PC-3 (cell line): ENCODE measurements at regions of chr13 and their contacts with region 1.

Region 1: DNA sequence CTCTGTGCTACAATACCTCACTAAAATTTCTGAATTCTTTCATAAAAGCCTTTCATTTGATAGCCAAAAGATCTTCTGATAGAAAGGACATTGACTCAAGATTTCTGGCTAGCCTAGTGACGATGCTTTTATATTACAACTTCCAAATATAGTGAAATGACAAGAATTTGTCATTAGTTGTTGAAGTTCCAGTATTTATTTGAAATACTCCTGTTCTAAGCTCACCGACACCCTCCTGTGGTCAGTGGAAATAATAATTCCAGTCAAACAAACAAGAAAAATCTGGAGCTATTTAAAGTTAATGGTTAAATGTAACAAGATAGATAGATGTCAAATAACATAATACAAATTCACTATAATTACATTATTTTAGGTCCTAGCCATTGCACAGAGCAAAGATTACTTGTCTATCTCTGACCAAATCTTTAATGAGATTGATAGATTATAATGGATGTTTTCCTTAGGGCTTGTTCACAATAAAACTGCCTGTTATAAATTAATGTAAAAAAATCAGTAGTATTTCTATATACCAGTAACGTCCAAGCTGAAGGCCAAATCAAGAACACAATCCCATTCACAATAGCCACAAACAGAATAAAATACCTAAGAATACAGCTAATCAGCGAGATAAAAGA is 195.5 kb downstream of the RGCC start:
- DNase-seq: peak; percentile 60
- ATAC-seq: no peak
- H3K4me3 ChIP-seq: no peak overlapping the region
- H3K27ac ChIP-seq: no peak overlapping the region
- H3K4me1 ChIP-seq: peaks cover 17% of the 10 kb centered on the region
- H3K27me3 ChIP-seq: no peaks in the 10 kb centered on the region
- CTCF ChIP-seq: peak; percentile 77

Region 2: GRCh38 chr13:41384755-41385503 is 267.9 kb before region 1 on chr13:
- CTCF ChIA-PET with region 1: no interaction called
- POLR2A ChIA-PET with region 1: no interaction called
- intact Hi-C with region 1: loop called (anchors 1 kb)
- DNase-seq: peak; percentile 36
- ATAC-seq: no peak
- H3K4me3 ChIP-seq: no peak overlapping the region
- H3K27ac ChIP-seq: no peak overlapping the region
- H3K4me1 ChIP-seq: no peaks in the 10 kb centered on the region
- H3K27me3 ChIP-seq: no peaks in the 10 kb centered on the region
- CTCF ChIP-seq: peak; percentile 63

Region 3: DNA sequence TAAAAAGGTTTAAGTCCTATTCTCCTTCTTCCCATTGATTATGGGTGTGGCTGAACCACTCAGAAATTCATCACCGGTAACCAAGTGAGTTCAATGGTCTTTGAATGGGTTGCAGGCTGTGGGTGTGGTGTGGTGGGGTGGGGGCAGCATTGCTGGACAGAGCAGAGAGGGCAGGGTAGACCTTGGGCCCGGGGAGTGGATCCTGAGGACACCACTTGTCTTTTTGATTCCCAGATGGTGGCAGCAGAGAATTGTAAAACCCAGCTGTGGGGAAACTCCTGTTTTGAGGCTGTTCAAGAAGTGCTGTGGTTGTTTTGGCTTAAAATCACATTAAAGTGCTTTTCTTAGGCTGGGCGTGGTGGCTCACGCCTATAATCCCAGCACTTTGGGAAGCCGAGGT is 241.3 kb before region 1 on chr13:
- CTCF ChIA-PET with region 1: interaction called, 13 read pairs
- POLR2A ChIA-PET with region 1: no interaction called
- intact Hi-C with region 1: loop called (anchors 1 kb)
- DNase-seq: peak; percentile 58
- ATAC-seq: peak; percentile 89
- H3K4me3 ChIP-seq: no peak overlapping the region
- H3K27ac ChIP-seq: no peak overlapping the region
- H3K4me1 ChIP-seq: no peaks in the 10 kb centered on the region
- H3K27me3 ChIP-seq: no peaks in the 10 kb centered on the region
- CTCF ChIP-seq: peak; percentile 60

Region 4: DNA sequence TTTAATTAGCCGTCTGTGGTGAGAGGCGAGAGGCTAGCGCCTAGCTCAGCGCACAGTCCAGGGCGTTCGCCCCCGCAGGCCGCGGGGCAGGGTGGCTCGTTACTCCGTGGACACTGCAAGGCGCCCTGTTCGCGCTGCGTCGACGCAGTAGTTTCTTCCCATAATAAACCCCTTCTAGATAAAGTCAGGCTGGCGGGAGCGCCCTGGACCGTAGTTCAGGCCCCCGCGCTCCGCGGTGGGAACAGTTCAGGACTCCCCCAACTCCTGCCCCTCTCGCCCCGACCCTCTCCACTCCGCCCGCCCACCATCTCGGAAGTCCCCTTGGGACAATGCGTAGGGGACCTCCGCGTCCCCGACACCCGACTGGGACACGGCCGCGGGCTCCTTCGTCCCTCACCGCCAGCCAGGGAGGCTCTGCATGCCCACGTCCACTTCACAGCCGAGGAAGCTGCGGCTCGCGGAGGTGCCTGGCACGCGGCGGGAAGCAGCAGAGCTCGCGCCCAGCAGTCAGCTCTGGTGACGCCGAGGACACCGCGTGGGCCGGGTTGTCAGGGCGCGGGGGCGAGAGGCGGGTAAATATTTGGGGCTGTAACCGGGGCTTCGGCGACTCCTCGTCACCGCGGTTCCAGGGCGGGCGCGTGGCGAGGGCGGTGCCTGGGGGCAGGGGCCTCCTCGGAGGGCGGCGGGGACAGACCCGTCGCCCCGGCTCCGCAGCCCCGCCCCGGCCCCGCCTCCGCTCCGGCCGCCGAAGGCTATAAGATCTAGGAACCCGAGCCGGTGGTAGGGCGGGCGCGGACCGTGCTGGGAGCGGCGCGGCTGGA is 195.9 kb before region 1 on chr13 and contains the start of gene RGCC:
- CTCF ChIA-PET with region 1: interaction called, 11 read pairs
- POLR2A ChIA-PET with region 1: no interaction called
- intact Hi-C with region 1: loop called (anchors 2 kb)
- DNase-seq: peak; percentile 56
- ATAC-seq: peak; percentile 73
- H3K4me3 ChIP-seq: peak within 1 kb of the TSS; percentile 78
- H3K27ac ChIP-seq: no peak within 1 kb of the TSS
- H3K4me1 ChIP-seq: peaks cover 4% of the 10 kb centered on the region; the same call in 1 of the 2 replicates
- H3K27me3 ChIP-seq: no peaks in the 10 kb centered on the region
- CTCF ChIP-seq: no peak
- total RNA-seq, gene RGCC: 2.4 and 2.6 TPM in 2 replicates

Region 5: GRCh38 chr13:41588899-41589298 is 63.9 kb before region 1 on chr13:
- CTCF ChIA-PET with region 1: interaction called, 6 read pairs
- POLR2A ChIA-PET with region 1: interaction called, 5 read pairs
- intact Hi-C with region 1: loop called (anchors 2 kb)
- DNase-seq: peak; percentile 86
- ATAC-seq: peak; percentile 92
- H3K4me3 ChIP-seq: no peak overlapping the region
- H3K27ac ChIP-seq: peak overlapping the region; percentile 78
- H3K4me1 ChIP-seq: peaks cover 32% of the 10 kb centered on the region
- H3K27me3 ChIP-seq: no peaks in the 10 kb centered on the region
- CTCF ChIP-seq: no peak

Region 6: DNA sequence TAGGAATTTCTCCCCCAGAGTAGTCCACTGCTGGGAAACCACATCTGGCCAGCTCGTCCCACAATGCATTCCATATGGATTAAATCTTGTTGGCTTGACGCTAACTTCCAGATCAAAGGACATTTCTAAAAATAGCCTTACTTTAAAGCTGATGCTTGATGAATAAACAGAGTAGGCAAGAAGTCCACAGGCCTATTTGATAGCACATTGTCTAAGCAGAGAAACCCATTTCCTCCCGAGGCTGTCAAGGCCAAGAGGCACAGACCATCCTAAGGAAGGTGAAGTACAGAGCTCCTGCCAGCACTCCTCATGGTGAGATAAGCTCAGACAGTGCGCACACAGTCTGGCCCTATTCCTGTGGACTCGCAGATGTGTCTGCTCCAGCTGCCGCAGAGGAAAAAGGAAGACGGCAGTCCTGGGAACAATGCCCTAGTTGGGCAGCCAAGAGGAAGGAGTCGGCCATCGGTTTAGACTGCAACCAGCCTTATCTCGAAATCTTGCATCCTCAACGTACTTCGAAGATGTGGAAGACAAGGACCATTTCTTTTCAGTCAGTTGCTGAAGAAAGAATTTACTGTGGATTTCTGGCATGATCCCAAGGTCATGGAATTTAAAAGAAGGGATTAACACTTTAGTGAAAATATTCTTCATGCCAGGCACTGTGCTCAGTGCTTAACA is 38.7 kb before region 1 on chr13:
- CTCF ChIA-PET with region 1: interaction called, 5 read pairs
- POLR2A ChIA-PET with region 1: no interaction called
- intact Hi-C with region 1: loop called (anchors 5 kb)
- DNase-seq: peak; percentile 35
- ATAC-seq: no peak
- H3K4me3 ChIP-seq: no peak overlapping the region
- H3K27ac ChIP-seq: no peak overlapping the region; the same call in 1 of the 2 replicates
- H3K4me1 ChIP-seq: peaks cover 44% of the 10 kb centered on the region
- H3K27me3 ChIP-seq: no peaks in the 10 kb centered on the region
- CTCF ChIP-seq: no peak

Region 7: DNA sequence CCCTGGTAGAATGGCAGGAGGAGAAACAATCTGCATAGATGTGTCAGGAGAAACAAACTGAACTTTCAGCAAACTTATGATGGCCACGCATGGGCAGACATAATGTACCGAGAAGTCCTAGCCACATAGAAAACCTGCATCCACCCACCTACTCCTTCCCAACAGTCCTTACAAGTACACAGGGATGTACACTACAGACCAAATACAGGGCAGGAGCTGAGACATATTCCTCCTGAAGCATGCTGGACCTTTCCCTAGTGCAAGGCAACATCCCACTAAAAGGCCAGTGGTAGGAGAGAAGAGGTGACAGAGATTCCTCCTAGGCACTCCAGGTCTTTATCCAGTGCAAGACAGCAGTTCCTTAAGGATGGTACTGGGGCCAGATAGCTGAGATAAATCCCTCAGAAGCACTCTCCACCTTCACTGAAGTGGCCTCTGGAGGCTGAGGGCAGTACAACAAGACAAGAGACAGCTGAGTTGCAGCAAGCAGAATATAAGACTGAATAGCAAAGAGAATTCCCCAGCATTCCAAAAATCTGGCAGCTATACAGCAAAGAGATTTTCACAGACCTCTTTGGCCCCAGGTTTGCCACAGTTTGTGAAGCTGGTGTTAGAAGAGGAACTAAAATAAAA is 289.7 kb after region 1 on chr13:
- CTCF ChIA-PET with region 1: no interaction called
- POLR2A ChIA-PET with region 1: no interaction called
- intact Hi-C with region 1: no loop called
- DNase-seq: peak; percentile 34
- ATAC-seq: peak; percentile 67
- H3K4me3 ChIP-seq: no peak overlapping the region
- H3K27ac ChIP-seq: no peak overlapping the region
- H3K4me1 ChIP-seq: peaks cover 8% of the 10 kb centered on the region; the same call in 1 of the 2 replicates
- H3K27me3 ChIP-seq: no peaks in the 10 kb centered on the region
- CTCF ChIP-seq: peak; percentile 38; the same call in 1 of the 2 replicates